ENCODE measurements at regions of chr6 and their contacts with region 1.

Region 1: DNA sequence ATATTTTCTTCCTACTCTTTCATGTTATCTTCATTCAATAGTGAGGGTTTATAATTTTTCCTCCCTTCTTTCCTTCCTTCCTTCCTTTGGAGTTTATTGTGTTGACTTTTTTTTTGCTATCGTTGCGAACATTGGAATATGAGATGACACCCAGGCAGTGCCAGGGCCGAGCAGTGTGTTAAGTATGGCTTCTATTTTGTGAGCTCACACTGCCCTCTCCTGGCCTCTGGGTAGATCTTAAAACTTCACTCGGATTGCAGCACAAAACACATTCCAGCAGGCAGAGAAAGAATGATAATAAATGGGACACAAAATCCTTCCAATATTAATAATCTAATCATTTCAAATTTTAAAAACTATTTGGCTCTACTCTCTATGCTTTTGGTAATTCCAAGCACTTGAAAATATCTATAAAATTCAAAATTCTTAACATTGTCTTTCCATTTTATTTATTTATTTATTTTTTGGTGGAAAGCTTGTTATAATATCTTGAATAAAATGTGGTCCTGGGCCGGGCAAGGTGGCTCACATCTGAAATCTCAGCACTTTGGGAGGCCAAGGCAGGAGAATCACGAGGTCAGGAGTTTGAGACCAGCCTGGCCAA is 147.4 kb upstream of the OLIG3 start:
- DNase-seq: peak; percentile 49
- H3K4me3 Mint-ChIP-seq: no peak overlapping the region
- H3K27ac Mint-ChIP-seq: no peak overlapping the region
- H3K4me1 Mint-ChIP-seq: peaks cover 21% of the 10 kb centered on the region
- H3K27me3 Mint-ChIP-seq: peaks cover 3% of the 10 kb centered on the region

Region 2: DNA sequence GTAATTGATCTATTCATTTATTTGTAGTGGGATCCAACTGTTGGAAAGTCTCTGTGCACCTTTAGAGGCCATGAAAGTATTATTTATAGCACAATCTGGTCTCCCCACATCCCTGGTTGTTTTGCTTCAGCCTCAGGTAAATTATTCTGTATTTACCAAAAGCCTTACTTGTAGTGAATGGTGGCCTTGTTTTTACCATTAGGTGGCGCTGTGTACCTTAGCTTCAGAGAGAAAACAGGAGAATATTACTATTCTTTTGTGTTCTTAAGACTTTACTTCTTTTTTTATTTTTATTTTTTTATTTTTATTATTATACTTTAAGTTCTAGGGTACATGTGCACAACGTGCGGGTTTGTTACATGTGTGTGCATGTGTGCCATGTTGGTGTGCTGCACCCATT is 795.5 kb before region 1 on chr6:
- intact Hi-C with region 1: loop called (anchors 2 kb)
- DNase-seq: no peak
- H3K4me3 Mint-ChIP-seq: no peak overlapping the region
- H3K27ac Mint-ChIP-seq: no peak overlapping the region
- H3K4me1 Mint-ChIP-seq: no peaks in the 10 kb centered on the region
- H3K27me3 Mint-ChIP-seq: no peaks in the 10 kb centered on the region

Region 3: DNA sequence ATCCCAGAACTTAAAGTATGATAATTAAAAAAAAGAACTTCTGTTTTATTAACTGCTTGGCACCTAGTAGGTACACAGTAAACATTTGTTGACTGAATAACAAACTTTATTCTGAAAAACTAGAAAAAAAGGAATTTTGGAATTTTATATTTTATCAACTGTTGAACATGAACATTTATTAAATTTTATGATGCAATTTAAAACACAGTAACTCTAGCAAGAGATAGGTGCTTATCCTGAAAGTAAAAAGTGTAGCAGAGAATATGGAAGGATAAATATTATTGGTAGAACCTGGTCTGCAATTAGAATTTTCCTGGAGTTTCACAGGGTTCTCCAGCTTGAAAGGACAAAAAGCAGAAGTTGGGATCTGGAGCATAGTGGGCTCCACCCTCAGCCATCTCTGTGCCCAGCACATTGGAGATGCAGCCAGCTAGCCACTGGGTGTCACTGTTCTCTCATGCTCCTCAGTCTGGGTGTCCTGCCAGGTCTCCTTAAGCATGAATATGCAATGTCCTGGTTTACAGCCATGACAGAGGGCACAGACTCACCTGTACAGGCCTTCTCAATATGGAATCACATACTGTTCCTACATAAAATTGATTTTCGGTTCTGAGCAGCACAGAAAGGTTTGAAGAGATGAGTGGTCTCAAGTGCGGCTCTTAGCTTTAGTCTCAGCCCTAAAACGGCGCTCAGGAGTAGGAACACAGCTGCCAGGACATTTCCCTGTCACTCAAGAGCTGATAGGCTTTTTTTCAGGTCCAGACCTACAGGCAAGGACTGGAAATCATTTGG is 565.1 kb before region 1 on chr6:
- intact Hi-C with region 1: loop called (anchors 1 kb)
- DNase-seq: peak; percentile 52
- H3K4me3 Mint-ChIP-seq: no peak overlapping the region
- H3K27ac Mint-ChIP-seq: no peak overlapping the region
- H3K4me1 Mint-ChIP-seq: no peaks in the 10 kb centered on the region
- H3K27me3 Mint-ChIP-seq: peaks cover 30% of the 10 kb centered on the region

Region 4: GRCh38 chr6:137271245-137272183 is 370.1 kb before region 1 on chr6:
- intact Hi-C with region 1: loop called (anchors 1 kb)
- DNase-seq: no peak
- H3K4me3 Mint-ChIP-seq: no peak overlapping the region
- H3K27ac Mint-ChIP-seq: no peak overlapping the region
- H3K4me1 Mint-ChIP-seq: peaks cover 13% of the 10 kb centered on the region
- H3K27me3 Mint-ChIP-seq: peaks cover 31% of the 10 kb centered on the region

Region 5: DNA sequence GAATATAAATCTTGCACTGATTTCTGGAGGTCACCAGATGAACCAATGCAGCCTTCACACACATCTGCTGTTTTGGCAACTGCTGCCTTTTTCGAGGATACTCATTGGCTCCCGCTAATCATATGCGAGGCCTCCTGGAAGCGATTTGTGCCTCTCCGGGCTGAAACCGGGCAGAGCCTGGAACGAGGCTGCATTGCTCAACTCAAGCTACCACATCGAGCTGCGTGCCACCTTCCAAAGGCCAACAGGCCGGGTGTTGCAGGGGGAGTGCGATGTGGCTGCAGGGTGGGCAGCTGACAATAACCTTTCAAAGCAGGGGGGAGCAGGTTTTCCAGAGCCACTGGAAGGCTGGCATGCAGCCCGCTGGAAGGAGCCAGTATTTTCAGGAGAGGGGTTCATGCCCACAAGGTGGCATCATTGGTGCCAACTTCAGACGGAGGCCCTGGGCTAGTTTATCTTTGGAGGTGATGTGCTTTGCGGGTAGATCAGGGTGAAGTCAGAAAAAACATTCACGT is 299.8 kb before region 1 on chr6:
- intact Hi-C with region 1: loop called (anchors 1 kb)
- DNase-seq: peak; percentile 19
- H3K4me3 Mint-ChIP-seq: peak overlapping the region; percentile 79
- H3K27ac Mint-ChIP-seq: no peak overlapping the region
- H3K4me1 Mint-ChIP-seq: peaks cover 23% of the 10 kb centered on the region
- H3K27me3 Mint-ChIP-seq: peaks cover 28% of the 10 kb centered on the region

Region 6: GRCh38 chr6:137497721-137498463 is 143.7 kb before region 1 on chr6:
- intact Hi-C with region 1: loop called (anchors 5 kb)
- DNase-seq: no peak
- H3K4me3 Mint-ChIP-seq: no peak overlapping the region
- H3K27ac Mint-ChIP-seq: no peak overlapping the region
- H3K4me1 Mint-ChIP-seq: peaks cover 20% of the 10 kb centered on the region
- H3K27me3 Mint-ChIP-seq: peaks cover 80% of the 10 kb centered on the region